ENCODE measurements at regions of chr1 and their contacts with region 1.

Region 1: GRCh38 chr1:208245185-208245705 is 1.1 kb upstream of the PLXNA2 start:
- DNase-seq: peak; percentile 82
- H3K4me3 ChIP-seq: peak overlapping the region; percentile 67
- H3K27ac ChIP-seq: no peak overlapping the region
- H3K4me1 ChIP-seq: peaks cover 7% of the 10 kb centered on the region
- CTCF ChIP-seq: peak; percentile 89

Region 2: DNA sequence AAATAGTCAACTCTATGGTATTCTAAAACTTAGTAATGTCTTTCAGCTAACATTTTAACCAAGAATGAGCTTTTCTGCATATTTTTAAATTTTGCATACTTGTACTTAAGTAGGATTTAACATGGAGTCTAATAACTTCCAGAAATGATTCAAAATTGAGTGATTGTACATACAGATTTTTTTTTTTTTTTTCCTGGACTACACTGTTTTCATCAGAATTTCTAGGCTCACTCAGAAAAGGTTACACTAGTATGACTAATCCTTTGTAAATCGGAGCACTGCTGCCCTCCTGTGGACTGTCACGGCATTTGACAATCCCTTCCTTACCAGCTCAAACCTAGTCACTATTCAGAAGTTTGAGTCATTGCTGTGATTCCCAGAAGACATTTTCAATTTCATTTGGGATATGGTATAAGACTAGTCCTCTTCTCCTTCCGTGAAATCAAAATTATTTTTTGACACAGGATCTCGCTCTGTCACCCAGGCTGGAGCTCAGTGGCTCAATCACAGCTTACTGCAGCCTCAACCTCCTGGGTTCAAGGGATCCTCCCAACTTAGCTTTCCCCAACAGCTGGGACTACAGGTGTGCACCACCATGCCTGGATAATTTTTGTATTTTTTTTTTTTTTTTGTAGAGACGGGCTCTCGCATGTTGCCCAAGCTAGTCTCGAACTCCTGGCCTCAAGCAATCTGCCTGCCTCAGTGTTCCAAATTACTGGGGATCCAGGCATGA is 447.9 kb before region 1 on chr1:
- CTCF ChIA-PET with region 1: no interaction called
- POLR2A ChIA-PET with region 1: no interaction called
- intact Hi-C with region 1: no loop called
- DNase-seq: peak; percentile 78
- H3K4me3 ChIP-seq: no peak overlapping the region
- H3K27ac ChIP-seq: no peak overlapping the region
- H3K4me1 ChIP-seq: no peaks in the 10 kb centered on the region
- CTCF ChIP-seq: peak; percentile 94

Region 3: DNA sequence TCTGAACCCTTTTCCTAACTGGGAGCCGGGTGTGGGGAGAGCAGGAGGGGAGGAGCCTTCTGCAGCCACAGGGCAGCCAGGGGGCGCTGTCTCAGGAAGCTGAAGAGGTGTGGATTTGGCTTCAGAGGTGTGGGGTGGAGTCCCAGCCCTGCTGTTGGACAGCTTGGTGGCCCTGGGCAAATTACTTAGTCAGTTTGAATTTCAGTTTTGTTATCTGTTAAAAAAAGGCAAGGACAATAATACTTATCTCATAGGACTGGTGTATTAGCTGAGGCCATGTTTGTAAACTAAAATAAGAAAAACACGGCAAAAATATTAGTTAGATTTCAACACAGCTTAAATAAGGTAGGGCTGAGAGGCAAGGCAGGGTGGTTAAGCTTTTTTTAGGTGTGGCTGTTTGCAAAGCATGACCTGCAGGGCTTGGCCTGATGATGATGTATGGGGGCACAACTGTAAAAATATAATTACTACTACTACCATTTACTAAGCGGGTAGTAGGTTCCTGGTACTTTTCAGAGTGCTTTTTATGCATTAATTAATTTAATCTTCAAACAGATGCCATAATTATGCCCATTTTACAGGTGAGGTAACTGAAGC is 112.9 kb before region 1 on chr1:
- CTCF ChIA-PET with region 1: no interaction called
- POLR2A ChIA-PET with region 1: no interaction called
- intact Hi-C with region 1: loop called (anchors 2 kb)
- DNase-seq: peak; percentile 37
- H3K4me3 ChIP-seq: no peak overlapping the region
- H3K27ac ChIP-seq: no peak overlapping the region
- H3K4me1 ChIP-seq: no peaks in the 10 kb centered on the region
- CTCF ChIP-seq: peak; percentile 85

Region 4: DNA sequence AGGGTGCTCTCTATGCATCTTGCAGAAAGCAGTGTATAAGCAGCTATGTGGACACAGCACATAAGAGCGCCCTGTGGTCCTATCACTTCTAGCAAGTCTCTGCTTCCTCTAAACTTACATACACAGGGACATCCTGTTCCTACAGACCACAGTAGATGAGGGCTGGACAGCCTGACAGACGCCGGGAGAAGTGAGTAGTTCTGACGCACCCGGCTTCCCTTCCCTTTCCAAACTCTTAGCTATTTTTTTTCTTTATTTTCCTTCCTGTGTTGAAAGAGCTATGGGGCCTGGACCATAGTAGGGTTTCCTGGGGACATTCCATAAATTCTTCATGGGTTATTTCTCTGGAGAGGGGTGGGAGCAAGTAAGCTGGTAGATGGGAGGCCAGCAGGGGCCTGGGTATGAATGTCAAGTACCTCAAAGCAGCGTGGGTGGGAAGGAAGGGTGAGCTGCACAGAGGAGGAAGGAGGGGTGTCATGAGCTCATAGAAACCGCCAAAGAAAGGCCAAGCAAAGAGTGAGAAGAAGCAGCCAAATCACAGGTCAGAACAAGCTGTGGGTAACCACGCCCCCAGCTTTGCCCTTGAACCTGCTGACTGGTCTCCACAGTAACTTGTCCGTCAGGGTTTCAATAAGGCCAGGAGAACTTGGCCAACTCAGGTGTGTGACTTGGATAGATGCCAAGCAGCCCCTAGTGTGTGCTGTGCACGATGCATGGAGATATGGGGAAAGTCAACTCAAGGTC is 37.7 kb before region 1 on chr1:
- CTCF ChIA-PET with region 1: no interaction called
- POLR2A ChIA-PET with region 1: no interaction called
- intact Hi-C with region 1: no loop called
- DNase-seq: no peak
- H3K4me3 ChIP-seq: no peak overlapping the region
- H3K27ac ChIP-seq: no peak overlapping the region
- H3K4me1 ChIP-seq: no peaks in the 10 kb centered on the region
- CTCF ChIP-seq: no peak